Heart left ventricle (tissue), 16 donors: ENCODE measurements at regions of chr2 and their contacts with region 1.

Region 1: GRCh38 chr2:187574969-187575750 is 20.9 kb upstream of the TFPI start:
- DNase-seq: no peak
- ATAC-seq: no peak
- H3K4me3 ChIP-seq: no peak overlapping the region
- H3K27ac ChIP-seq: peak overlapping the region in 8 of 12 donors; percentile 7 to 56 (median 35)
- H3K4me1 ChIP-seq: peaks cover 0 to 26% (median 1%) of the 10 kb centered on the region in 12 donors
- H3K27me3 ChIP-seq: no peaks in the 10 kb centered on the region
- CTCF ChIP-seq: no peak
- POLR2A ChIP-seq: no peak

Region 2: DNA sequence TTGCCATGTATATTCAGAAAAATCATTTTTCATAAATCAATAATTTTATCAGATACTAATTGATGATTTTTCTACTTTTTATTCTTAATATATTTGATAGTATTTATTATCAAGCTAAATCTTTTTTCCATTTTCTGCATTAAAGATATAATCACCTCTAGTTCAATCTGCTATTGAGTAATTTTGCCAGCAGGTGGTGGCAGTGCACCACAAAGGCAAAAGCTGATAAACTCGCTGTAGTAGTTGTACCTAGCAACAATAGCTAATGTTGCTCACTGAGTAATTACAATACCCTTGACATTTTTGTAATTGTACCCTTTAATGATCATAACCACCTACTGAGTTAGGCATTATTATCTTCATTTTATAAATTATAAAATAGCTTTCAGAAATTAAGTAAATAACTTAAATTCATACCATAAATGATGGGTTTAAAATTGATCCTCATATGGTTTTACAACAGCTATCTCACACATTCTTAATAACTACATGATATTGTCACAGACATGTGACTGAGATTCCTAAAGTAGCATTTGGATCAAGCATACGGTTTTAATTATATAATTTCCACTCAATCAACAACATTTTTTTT is 75.1 kb before region 1 on chr2:
- intact Hi-C with region 1: loop called in 8 of 10 experiments (anchors 1 to 5 kb)
- DNase-seq: peak in 3 of 5 donors; percentile 30 to 41 (median 39)
- ATAC-seq: peak in 3 of 4 donors; percentile 39 to 77 (median 62)
- H3K4me3 ChIP-seq: no peak overlapping the region
- H3K27ac ChIP-seq: no peak overlapping the region
- H3K4me1 ChIP-seq: peaks cover 0 to 35% (median 0%) of the 10 kb centered on the region in 12 donors
- H3K27me3 ChIP-seq: no peaks in the 10 kb centered on the region
- CTCF ChIP-seq: peak; percentile 70 to 96 (median 84)
- POLR2A ChIP-seq: no peak

Region 3: DNA sequence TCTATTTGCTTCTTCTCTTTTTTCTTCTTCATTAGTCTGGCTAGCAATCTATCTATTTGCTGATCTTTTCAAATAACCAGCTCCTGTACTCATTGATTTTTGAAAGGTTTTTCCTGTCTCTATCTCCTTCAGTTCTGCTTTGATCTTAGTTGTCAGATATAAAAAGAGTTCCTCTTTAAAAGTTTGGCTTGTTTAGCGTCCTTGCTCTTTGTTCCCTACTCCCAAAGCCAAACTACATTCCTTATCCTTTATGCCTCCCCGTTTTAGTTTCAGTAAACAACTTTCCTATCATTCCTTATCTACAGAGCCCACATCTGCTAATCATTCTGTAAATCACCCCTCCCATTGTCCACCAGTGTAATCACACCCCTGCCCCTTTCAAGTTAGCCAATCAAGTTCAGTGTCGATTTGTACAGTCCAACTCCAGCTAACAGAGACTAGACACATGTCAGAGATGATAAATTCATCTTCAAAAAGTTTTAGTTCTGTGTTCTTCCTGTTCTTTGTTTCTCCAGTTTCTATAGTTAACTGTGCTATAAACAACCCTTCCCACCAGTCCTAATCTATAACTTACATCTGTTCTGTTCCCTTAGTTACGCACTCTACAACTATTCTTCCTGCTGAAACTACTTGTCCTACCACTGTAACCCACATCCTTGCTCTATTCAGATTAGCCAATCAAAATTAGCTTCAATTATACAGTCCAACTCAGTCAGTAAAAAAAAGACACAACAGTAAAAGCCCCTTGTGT is 65.3 kb before region 1 on chr2:
- intact Hi-C with region 1: loop called in 1 of 10 experiments (anchors 5 kb)
- DNase-seq: no peak
- ATAC-seq: peak in 1 of 4 donors; percentile 37
- H3K4me3 ChIP-seq: no peak overlapping the region
- H3K27ac ChIP-seq: no peak overlapping the region
- H3K4me1 ChIP-seq: peaks cover 0 to 4% (median 0%) of the 10 kb centered on the region in 12 donors
- H3K27me3 ChIP-seq: no peaks in the 10 kb centered on the region
- CTCF ChIP-seq: no peak
- POLR2A ChIP-seq: no peak